GM18951 (cell line): ENCODE measurements at regions of chr7 and their contacts with region 1.

Region 1: GRCh38 chr7:138738551-138739335 is 37.6 kb upstream of the SVOPL start:
- POLR2A ChIP-seq: no peak

Region 2: GRCh38 chr7:137898839-137899721 is 839.7 kb before region 1 on chr7:
- in situ Hi-C with region 1: loop called (anchors 25 kb)
- POLR2A ChIP-seq: no peak

Region 3: GRCh38 chr7:138161600-138162081 is 577.1 kb before region 1 on chr7:
- in situ Hi-C with region 1: loop called (anchors 25 kb)
- POLR2A ChIP-seq: no peak

Region 4: DNA sequence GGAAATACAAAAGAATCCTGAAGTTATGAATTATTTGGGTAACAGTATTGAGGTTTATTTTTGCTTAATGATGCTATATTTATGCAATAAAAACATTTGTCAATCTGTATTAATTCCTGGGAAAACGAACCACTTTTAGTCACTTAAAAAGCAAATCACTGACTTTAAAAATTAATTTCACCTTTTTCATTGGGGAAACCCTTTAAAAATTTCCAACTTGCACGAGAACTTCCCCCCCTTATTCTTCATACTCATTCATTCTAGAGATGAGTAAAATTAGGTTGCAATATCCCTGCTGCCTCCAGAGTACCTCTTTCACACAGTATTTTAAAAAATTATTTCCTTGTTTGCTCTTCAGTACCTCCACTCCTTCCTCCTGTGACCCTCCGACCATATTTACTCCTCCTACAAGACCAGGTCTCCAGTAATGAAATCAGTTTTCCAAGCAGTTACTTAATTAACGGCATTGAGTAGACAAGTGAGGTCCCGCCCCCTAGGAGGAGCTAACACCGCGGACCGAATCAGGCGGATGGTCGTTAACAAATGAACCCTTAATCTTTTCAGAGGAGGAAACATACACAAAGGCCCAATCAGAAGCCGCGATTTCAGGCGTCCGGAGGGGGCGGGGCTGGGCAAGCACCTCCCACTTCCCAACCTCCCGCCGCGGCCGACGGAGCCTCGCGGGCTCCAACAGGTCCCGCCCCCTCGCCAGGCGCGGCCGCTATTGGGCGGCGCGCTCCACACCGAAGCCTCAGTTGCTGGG is 279.1 kb before region 1 on chr7:
- in situ Hi-C with region 1: loop called (anchors 25 kb)
- POLR2A ChIP-seq: no peak

Region 5: DNA sequence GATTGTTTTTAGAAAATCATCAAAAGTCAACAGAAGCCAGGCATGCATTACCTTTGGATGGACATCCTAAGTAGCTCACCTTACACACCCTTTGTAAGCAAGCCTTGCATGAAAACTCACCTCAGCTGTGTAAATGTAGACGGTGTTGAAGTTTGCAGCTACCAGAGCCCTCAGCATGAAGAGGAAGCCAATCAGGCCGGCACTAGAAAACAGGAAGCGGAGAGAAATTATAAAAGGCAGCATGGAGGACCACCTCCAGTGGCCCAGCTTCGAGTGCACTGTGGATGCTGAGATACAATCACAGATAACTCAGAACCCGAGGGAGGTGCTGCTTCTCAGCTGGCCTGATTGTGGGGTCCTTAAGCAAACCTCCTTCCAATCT is 112.9 kb before region 1 on chr7:
- in situ Hi-C with region 1: no loop called
- POLR2A ChIP-seq: no peak